Activated CD8-positive, alpha-beta T cell treated with anti-CD3 and anti-CD28 coated beads, Interleukin-2, amount 10 ng/mL, durations not matched to agents 7 days and 5 days (primary cell): ENCODE measurements at regions of chr17 and their contacts with region 1.

Region 1: DNA sequence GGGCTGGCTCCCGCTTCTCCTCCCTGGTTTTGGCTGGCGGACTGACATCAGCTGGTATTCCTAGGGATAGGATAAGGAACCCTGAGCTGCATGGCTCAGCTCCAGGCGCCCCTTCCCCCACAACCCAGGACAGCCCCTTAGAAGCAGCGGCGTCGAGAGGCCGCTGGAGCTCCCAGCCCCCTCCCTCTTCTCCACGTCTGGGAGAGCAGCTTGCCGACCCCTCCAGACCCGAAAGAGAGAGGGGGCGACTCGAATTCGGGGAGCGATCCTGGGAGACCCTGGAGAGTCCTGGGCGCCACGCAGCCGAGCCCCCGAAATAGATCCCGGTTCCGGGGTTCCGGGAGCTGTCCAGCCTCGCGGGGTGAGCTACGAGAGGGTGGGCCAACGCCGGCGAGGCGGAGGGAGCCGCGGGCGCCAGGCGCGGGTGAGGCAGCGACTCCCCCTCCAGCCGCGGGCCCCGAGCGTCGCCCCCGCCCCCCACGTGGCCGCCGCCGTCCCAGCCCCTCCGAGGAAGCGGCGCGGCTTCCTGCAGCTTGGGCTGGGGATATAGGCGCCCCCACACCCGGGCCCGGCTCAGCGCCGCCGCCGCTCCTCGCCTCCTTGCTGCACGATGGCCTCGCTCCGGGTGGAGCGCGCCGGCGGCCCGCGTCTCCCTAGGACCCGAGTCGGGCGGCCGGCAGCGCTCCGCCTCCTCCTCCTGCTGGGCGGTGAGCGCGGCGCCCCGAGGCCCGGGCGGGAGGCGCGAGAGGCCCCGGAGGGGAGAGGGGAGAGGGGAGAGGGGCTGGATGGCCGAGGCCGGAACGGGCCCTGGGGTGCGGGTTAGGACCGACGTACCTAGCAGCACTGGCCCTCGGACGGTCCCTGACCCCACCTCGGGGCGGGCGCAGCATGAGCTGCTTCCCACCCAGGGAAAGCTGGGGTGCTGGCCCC is at the start of gene RAMP2:
- DNase-seq: no peak
- ATAC-seq: peak; percentile 48
- H3K4me3 Mint-ChIP-seq: no peak within 1 kb of the TSS
- H3K27ac Mint-ChIP-seq: no peak within 1 kb of the TSS
- H3K4me1 Mint-ChIP-seq: peaks cover 4% of the 10 kb centered on the region
- H3K27me3 Mint-ChIP-seq: peaks cover 54% of the 10 kb centered on the region
- total RNA-seq, gene RAMP2: not detected

Region 2: DNA sequence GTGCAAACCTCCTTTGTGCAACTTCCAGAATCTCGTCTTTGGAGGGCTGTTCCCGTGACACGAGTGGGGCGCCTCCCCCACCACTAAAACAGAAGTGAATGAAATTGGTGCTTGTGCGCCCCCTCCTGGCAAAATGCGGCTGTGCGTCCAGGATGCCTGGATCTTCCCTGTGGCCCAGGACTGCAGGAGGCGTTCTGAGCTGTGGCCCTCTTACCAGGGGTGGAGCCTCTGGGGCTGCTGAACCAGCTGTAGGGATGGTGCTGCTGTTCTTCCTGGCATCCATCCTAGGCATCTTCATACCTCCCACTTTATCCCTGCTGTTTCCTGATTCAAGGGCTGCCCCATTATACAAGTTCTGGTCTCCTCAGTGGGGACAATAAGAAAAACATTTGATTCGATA is 243.4 kb before region 1 on chr17:
- CTCF ChIA-PET with region 1: interaction called, 10 read pairs
- POLR2A ChIA-PET with region 1: no interaction called
- DNase-seq: peak; percentile 87
- ATAC-seq: peak; percentile 86
- H3K4me3 Mint-ChIP-seq: no peak overlapping the region
- H3K27ac Mint-ChIP-seq: no peak overlapping the region
- H3K4me1 Mint-ChIP-seq: peaks cover 5% of the 10 kb centered on the region
- H3K27me3 Mint-ChIP-seq: peaks cover 8% of the 10 kb centered on the region

Region 3: GRCh38 chr17:42609182-42609813 is 151.6 kb before region 1 on chr17 and contains the starts of genes RETREG3 and TUBG1:
- CTCF ChIA-PET with region 1: interaction called, 15 read pairs
- POLR2A ChIA-PET with region 1: interaction called, 3 read pairs
- DNase-seq: peak; percentile 99
- ATAC-seq: peak; percentile 92
- H3K4me3 Mint-ChIP-seq: peak within 1 kb of the TSS; percentile 100
- H3K27ac Mint-ChIP-seq: peak within 1 kb of the TSS; percentile 97
- H3K4me1 Mint-ChIP-seq: peaks cover 42% of the 10 kb centered on the region
- H3K27me3 Mint-ChIP-seq: no peaks in the 10 kb centered on the region
- total RNA-seq, gene RETREG3: 53.6 to 54.7 TPM
- total RNA-seq, gene TUBG1: 82.3 to 83.4 TPM

Region 4: DNA sequence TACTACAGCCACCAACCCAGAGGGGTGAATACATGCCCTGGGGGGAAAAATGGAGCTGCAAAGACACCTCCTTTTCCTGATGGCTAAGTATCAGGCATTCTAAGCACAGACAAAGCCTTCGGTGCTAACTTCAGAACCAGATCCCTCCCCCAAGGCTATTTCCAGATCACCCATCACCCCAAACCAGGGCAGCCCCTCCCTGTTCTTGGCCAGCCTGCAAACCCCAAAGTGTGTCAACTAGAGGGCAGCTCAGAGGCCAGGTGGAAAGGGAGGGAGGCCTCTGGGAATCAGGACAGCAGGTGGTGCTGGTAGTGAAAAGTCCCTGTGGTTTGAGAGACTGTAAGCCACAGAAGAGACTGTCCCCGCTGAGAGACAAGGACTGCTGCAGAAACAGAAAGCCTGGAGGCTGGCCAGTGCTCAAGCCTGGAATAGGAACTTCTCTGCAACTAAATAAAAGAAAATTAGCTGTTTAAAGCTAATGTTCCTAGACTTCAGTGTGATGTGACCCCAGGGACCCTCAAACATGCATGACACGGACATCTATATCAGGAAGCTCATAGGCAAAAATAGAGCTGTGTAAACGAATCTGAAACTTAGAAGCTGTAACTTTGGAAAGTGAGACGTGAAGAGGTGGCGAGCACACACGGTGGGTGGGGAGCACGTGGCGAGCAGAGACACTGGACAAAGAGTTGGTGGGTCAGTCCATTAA is 142.3 kb before region 1 on chr17:
- CTCF ChIA-PET with region 1: interaction called, 10 read pairs
- POLR2A ChIA-PET with region 1: no interaction called
- DNase-seq: peak; percentile 26
- ATAC-seq: peak; percentile 56
- H3K4me3 Mint-ChIP-seq: no peak overlapping the region
- H3K27ac Mint-ChIP-seq: peak overlapping the region; percentile 5
- H3K4me1 Mint-ChIP-seq: peaks cover 15% of the 10 kb centered on the region
- H3K27me3 Mint-ChIP-seq: peaks cover 2% of the 10 kb centered on the region

Region 5: DNA sequence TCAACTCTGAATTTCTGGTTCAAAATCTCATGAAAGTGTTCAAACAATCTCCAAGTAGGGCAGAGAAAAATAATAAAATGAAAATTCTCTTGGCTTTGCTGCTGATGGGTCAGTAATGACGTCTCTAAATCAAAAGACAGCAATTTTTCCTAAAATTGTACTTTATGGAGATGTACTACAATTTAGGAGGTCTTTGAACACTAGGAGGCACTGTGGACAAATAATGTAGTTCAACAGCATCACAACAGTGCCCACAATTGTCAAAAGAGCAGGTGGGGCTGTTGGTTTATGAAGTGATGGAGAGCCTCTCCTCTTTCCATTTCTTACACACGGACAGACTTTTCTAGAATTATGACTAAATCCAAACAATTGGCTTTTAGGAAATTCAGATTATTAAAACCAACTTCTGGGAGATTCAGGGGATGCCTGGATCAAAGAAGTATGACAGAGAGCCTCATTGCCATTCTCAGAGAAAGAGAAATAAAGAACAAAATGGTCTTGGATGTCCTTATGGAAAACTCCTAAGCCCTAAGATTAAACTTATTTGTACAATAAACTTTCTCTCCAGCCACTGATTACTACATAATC is 39.8 kb before region 1 on chr17:
- CTCF ChIA-PET with region 1: interaction called, 19 read pairs
- POLR2A ChIA-PET with region 1: no interaction called
- DNase-seq: peak; percentile 61
- ATAC-seq: peak; percentile 84
- H3K4me3 Mint-ChIP-seq: no peak overlapping the region
- H3K27ac Mint-ChIP-seq: no peak overlapping the region
- H3K4me1 Mint-ChIP-seq: no peaks in the 10 kb centered on the region
- H3K27me3 Mint-ChIP-seq: no peaks in the 10 kb centered on the region

Region 6: GRCh38 chr17:42750739-42751344 is 10.1 kb before region 1 on chr17:
- CTCF ChIA-PET with region 1: interaction called, 22 read pairs
- POLR2A ChIA-PET with region 1: interaction called, 3 read pairs
- DNase-seq: no peak
- ATAC-seq: no peak
- H3K4me3 Mint-ChIP-seq: no peak overlapping the region
- H3K27ac Mint-ChIP-seq: no peak overlapping the region
- H3K4me1 Mint-ChIP-seq: no peaks in the 10 kb centered on the region
- H3K27me3 Mint-ChIP-seq: peaks cover 44% of the 10 kb centered on the region

Region 7: GRCh38 chr17:42773290-42774035 is 12.5 kb after region 1 on chr17 and contains the start of gene VPS25:
- CTCF ChIA-PET with region 1: interaction called, 36 read pairs
- POLR2A ChIA-PET with region 1: interaction called, 21 read pairs
- DNase-seq: peak; percentile 82
- ATAC-seq: peak; percentile 97
- H3K4me3 Mint-ChIP-seq: peak within 1 kb of the TSS; percentile 99
- H3K27ac Mint-ChIP-seq: peak within 1 kb of the TSS; percentile 99
- H3K4me1 Mint-ChIP-seq: peaks cover 34% of the 10 kb centered on the region
- H3K27me3 Mint-ChIP-seq: peaks cover 2% of the 10 kb centered on the region
- total RNA-seq, gene VPS25: 67.8 to 70.5 TPM

Region 8: GRCh38 chr17:42872251-42872965 is 111.5 kb after region 1 on chr17:
- CTCF ChIA-PET with region 1: no interaction called
- POLR2A ChIA-PET with region 1: no interaction called
- DNase-seq: no peak
- ATAC-seq: no peak
- H3K4me3 Mint-ChIP-seq: no peak overlapping the region
- H3K27ac Mint-ChIP-seq: no peak overlapping the region
- H3K4me1 Mint-ChIP-seq: no peaks in the 10 kb centered on the region
- H3K27me3 Mint-ChIP-seq: peaks cover 11% of the 10 kb centered on the region